ENCODE measurements at regions of chr6 and their contacts with region 1.

Region 1: GRCh38 chr6:108848116-108848868 is at the start of gene ARMC2:
- DNase-seq: peak; percentile 76 to 91 (median 85)
- H3K4me3 ChIP-seq: peak within 1 kb of the TSS; percentile 68
- H3K4me3 Mint-ChIP-seq: peak within 1 kb of the TSS; percentile 83 to 97 (median 89)
- H3K27ac ChIP-seq: peak within 1 kb of the TSS; percentile 65
- H3K27ac Mint-ChIP-seq: peak within 1 kb of the TSS; percentile 89 to 95 (median 92)
- H3K4me1 ChIP-seq: peaks cover 7% of the 10 kb centered on the region
- H3K4me1 Mint-ChIP-seq: peaks cover 25 to 52% (median 44%) of the 10 kb centered on the region in 3 donors
- H3K27me3 ChIP-seq: no peaks in the 10 kb centered on the region
- H3K27me3 Mint-ChIP-seq: peaks cover 0 to 3% of the 10 kb centered on the region in 2 donors
- total RNA-seq, gene ARMC2: 6.2 to 6.7 TPM

Region 2: GRCh38 chr6:108558372-108559096 is 289.8 kb before region 1 on chr6:
- CTCF ChIA-PET with region 1: interaction called, 4 read pairs
- POLR2A ChIA-PET with region 1: interaction called, 12 read pairs
- DNase-seq: peak; percentile 95 to 99 (median 97)
- H3K4me3 ChIP-seq: peak overlapping the region; percentile 80
- H3K4me3 Mint-ChIP-seq: peak overlapping the region; percentile 96 to 100 (median 98)
- H3K27ac ChIP-seq: peak overlapping the region; percentile 99
- H3K27ac Mint-ChIP-seq: peak overlapping the region; percentile 98 to 100 (median 99)
- H3K4me1 ChIP-seq: peaks cover 26% of the 10 kb centered on the region
- H3K4me1 Mint-ChIP-seq: peaks cover 21 to 27% (median 21%) of the 10 kb centered on the region in 3 donors
- H3K27me3 ChIP-seq: no peaks in the 10 kb centered on the region
- H3K27me3 Mint-ChIP-seq: peaks cover 2 to 8% of the 10 kb centered on the region in 2 donors